Vagina (tissue), 2 donors: ENCODE measurements at regions of chr17 and their contacts with region 1.

Region 1: GRCh38 chr17:40362696-40363110 is 1.8 kb downstream of the GJD3 start:
- DNase-seq: no peak
- H3K4me3 ChIP-seq: peak overlapping the region; percentile 44 to 65
- H3K27ac ChIP-seq: no peak overlapping the region
- H3K4me1 ChIP-seq: peaks cover 28% of the 10 kb centered on the region
- H3K27me3 ChIP-seq: no peaks in the 10 kb centered on the region
- CTCF ChIP-seq: peak in 1 of 3 experiments; percentile 16
- POLR2A ChIP-seq: no peak

Region 2: DNA sequence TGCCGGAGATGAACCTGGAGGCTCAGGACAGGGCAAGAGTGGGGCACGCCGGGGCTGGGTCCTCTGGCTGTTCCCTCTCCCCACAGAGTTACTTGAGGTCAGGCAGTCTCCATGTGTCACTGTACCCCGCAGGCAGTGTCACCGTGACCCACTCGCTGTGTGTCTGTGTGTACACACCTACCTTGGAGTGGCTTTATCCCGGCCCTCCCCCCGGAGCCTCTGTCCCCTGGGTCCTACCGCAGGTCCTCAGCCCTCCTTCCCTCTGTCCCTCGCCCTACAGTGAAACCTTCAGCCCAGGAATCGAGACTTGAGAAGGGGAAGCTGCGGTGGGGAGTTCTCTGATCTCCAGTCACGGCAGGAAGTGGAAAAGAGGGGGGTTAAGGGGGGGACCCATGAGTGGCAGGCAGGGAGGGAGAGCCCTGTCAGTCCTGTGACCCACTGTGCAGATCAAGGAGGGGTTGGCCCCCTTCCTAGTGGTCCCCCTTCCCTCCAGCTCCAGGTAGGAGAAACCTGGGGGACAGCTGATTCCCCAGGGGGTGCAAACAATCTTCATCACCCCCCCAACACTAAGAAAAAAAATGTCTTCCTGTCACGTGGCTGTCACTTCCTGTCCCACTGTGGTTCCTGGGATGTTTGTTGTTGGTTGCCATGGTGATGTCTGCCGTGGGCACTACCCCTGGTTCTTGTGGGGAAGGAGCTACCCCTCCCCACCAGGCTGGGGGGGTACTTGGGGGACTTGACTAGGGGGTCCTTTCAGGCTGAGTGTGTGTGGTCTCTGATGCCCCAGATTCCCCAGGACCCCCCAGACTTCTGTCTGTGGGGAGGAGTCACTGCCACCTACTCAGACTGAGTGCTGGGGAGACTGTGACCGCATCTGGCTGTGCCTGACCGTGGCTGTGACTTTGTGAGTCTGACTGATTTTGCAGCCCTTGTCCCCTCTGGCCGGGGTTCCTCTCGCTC is 40.1 kb before region 1 on chr17:
- intact Hi-C with region 1: no loop called
- DNase-seq: no peak
- H3K4me3 ChIP-seq: peak overlapping the region; percentile 80 to 86
- H3K27ac ChIP-seq: peak overlapping the region; percentile 96
- H3K4me1 ChIP-seq: peaks cover 94% of the 10 kb centered on the region
- H3K27me3 ChIP-seq: no peaks in the 10 kb centered on the region
- CTCF ChIP-seq: no peak
- POLR2A ChIP-seq: no peak

Region 3: GRCh38 chr17:40387680-40388079 is 25.0 kb after region 1 on chr17:
- intact Hi-C with region 1: no loop called
- DNase-seq: no peak
- H3K4me3 ChIP-seq: no peak overlapping the region
- H3K27ac ChIP-seq: no peak overlapping the region
- H3K4me1 ChIP-seq: no peaks in the 10 kb centered on the region
- H3K27me3 ChIP-seq: no peaks in the 10 kb centered on the region
- CTCF ChIP-seq: no peak
- POLR2A ChIP-seq: no peak

Region 4: GRCh38 chr17:40417609-40418427 is 55.1 kb after region 1 on chr17 and contains the start of gene TOP2A:
- intact Hi-C with region 1: loop called (anchors 10 kb)
- DNase-seq: peak in 1 of 2 donors; percentile 100
- H3K4me3 ChIP-seq: peak within 1 kb of the TSS; percentile 51 to 65
- H3K27ac ChIP-seq: peak within 1 kb of the TSS; percentile 56
- H3K4me1 ChIP-seq: peaks cover 7% of the 10 kb centered on the region
- H3K27me3 ChIP-seq: no peaks in the 10 kb centered on the region
- CTCF ChIP-seq: peak in 1 of 3 experiments; percentile 8
- POLR2A ChIP-seq: no peak
- total RNA-seq, gene TOP2A: 16.9 TPM